AG04449 (cell line): ENCODE measurements at regions of chr2 and their contacts with region 1.

Region 1: DNA sequence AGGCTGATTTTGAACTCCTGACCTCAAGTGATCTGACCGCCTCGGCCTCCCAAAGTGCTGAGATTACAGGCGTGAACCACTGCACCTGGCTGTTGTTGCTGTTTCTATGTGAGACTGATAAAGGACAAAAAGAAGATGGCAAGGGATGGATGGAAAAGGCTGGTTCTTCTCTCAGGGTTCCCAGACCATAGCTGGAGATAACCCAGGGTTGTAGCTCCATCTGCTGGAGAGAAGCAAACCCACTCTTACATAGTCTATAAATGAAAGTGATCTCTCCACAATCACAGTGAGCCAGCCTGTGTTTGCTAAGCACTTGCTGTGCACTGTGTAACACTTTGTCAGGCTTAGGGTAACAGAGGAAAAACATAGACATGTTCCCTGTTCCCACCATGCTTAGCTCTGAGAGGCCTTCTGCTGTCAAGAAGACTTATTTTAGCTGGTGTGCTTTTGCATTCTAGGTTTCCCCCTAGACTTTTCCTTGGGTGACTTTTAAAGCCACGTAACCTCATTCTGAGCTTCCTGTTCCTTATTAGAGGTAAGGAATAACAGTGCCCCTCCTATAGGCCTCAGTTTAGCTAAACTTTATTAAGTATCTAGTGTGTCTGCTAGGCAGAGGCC is 49.7 kb downstream of the LIMS1 start:
- DNase-seq: no peak
- H3K4me3 ChIP-seq: no peak overlapping the region
- CTCF ChIP-seq: peak; percentile 72

Region 2: DNA sequence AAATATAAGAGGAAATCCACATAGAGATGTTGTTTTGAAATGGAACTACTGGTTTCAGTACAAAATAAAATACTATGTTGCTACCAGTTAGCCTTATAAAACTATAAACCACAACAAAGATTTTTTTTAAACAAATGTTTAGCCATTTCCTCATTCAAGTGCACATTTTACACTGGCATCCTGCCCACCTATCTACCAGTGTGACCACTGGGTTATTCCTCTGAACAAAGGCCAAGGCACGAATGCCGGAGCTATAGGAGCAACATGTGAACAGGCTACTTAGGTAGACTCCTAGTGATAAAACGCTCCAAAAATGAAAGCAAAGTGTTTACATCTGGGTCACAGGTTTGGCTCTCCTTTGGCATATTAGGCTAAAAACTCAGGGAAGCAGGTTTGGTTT is 238.1 kb before region 1 on chr2:
- CTCF ChIA-PET with region 1: interaction called, 64 read pairs
- POLR2A ChIA-PET with region 1: no interaction called
- DNase-seq: no peak
- H3K4me3 ChIP-seq: no peak overlapping the region
- CTCF ChIP-seq: no peak

Region 3: DNA sequence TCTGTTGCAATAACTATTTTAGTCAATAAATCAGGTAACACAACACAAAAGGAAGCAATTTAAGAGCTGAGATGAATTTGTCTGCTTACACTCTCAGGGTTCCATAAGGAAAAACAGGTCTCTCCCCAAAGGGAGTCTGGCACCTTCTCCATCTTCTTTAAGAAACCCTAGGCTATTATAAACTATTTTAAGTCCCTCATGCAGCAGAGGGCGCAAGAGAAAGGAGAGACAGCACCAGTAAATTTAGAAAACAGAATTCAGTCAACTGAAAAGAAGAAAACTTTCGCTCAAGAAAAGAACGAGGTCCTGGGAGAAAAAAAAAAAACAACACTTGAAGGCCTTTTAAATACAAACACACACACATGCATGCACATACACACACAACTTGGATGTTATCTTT is 187.2 kb before region 1 on chr2:
- CTCF ChIA-PET with region 1: interaction called, 14 read pairs
- POLR2A ChIA-PET with region 1: no interaction called
- DNase-seq: no peak
- H3K4me3 ChIP-seq: no peak overlapping the region
- CTCF ChIP-seq: no peak

Region 4: DNA sequence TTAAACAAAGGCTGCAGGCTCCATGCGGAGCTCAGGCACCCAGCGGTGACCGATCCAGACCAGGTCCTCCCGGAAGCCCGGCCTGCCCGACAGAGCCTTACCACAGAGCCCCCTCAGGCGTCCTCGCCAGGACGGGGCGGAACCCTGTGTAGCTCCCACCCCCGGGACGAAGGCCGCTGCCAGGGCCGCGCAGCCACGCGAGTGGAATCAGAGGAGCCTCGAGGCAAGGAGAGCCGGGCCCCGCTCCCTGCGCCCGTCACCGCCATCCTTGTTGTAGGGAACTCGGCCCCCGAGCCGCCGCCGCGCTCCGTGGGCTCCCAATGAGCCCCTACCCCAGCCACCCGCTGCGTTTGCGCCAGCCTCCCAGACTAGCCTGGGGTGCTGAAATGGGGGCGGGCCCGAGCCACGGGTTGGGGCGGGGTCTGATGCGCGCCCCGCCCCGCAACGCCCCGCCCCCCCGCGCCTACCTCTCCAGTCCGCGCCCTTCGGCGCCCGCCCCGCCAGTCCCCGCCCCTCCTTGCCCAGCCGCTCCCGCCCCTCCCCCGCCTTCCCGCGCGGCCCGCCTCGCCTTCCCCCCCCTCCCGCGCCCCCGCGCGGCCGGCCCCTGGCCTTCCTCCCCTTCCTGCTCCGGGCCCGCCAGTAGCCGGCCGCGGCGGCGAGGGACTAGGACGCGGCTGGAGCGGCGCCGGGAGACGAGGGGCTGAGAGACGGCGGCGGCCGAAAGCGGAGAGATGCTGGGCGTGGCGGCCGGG is 50.0 kb before region 1 on chr2 and contains the start of gene LIMS1:
- CTCF ChIA-PET with region 1: interaction called, 10 read pairs
- POLR2A ChIA-PET with region 1: interaction called, 3 read pairs
- DNase-seq: no peak
- H3K4me3 ChIP-seq: peak within 1 kb of the TSS; percentile 76
- CTCF ChIP-seq: peak; percentile 5

Region 5: DNA sequence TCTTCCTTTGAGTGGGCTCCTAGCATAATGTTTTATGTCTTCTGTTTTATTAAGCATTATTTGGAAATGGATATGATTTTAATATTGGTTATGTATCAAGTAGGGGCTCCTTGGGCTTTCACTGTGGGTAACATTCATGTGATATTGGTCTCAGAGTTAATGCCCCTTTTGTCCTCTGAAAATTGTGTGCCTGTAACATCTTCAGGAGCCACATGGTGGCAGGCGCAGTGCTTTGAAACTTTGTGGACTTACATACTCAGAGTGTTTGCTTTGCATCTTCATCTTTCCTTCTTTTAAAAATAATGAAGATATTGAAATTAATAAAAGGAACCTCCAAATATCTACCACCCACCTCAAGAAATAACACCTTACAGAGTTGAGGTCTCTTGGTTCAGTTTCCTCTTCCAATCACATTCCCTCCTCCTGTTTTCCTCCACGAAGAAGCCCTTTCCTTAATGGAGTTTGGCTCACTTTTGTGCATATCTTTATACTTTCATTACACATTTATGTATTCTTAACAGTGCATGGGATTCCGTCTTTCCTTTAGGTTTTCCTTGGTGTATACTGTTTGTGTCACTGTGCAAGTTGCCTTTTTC is 23.8 kb after region 1 on chr2:
- CTCF ChIA-PET with region 1: interaction called, 15 read pairs
- POLR2A ChIA-PET with region 1: no interaction called
- DNase-seq: no peak
- H3K4me3 ChIP-seq: no peak overlapping the region
- CTCF ChIP-seq: peak; percentile 66